ENCODE measurements at regions of chr6 and their contacts with region 1.

Region 1: GRCh38 chr6:134577998-134578397 is 260.1 kb upstream of the SGK1 start:
- DNase-seq: no peak
- H3K4me3 Mint-ChIP-seq: no peak overlapping the region
- H3K27ac Mint-ChIP-seq: no peak overlapping the region
- H3K4me1 Mint-ChIP-seq: no peaks in the 10 kb centered on the region
- H3K27me3 Mint-ChIP-seq: no peaks in the 10 kb centered on the region
- CTCF ChIP-seq: no peak

Region 2: GRCh38 chr6:134541001-134541400 is 37.0 kb before region 1 on chr6:
- CTCF ChIA-PET with region 1: no interaction called
- intact Hi-C with region 1: loop called (anchors 1 kb)
- DNase-seq: no peak
- H3K4me3 Mint-ChIP-seq: no peak overlapping the region
- H3K27ac Mint-ChIP-seq: no peak overlapping the region
- H3K4me1 Mint-ChIP-seq: no peaks in the 10 kb centered on the region
- H3K27me3 Mint-ChIP-seq: no peaks in the 10 kb centered on the region
- CTCF ChIP-seq: no peak

Region 3: GRCh38 chr6:134720353-134721059 is 142.5 kb after region 1 on chr6:
- CTCF ChIA-PET with region 1: no interaction called
- intact Hi-C with region 1: no loop called
- DNase-seq: no peak
- H3K4me3 Mint-ChIP-seq: no peak overlapping the region
- H3K27ac Mint-ChIP-seq: no peak overlapping the region
- H3K4me1 Mint-ChIP-seq: peaks cover 9% of the 10 kb centered on the region
- H3K27me3 Mint-ChIP-seq: no peaks in the 10 kb centered on the region
- CTCF ChIP-seq: no peak

Region 4: DNA sequence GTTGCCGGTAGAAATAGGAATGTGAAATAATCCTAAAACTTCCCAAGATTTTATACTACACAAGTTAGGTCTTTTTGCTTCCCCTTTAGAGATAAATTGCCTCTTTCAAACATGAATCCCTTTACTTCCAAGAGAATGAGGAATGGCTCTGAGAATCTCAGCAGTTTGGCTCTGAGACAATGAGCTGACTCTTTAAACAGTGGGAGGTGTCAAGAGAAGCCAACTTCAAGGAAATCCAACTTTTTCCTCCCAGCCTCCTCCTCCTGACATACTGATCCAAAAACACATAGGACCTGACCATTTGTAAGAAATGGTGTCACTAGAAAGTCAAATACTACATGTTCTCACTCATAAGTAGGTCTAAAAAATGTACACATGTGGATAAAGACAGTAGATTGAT is 217.7 kb after region 1 on chr6:
- CTCF ChIA-PET with region 1: no interaction called
- intact Hi-C with region 1: no loop called
- DNase-seq: no peak
- H3K4me3 Mint-ChIP-seq: no peak overlapping the region
- H3K27ac Mint-ChIP-seq: no peak overlapping the region
- H3K4me1 Mint-ChIP-seq: no peaks in the 10 kb centered on the region
- H3K27me3 Mint-ChIP-seq: no peaks in the 10 kb centered on the region
- CTCF ChIP-seq: no peak

Measured in Calu3 (cell line).